ENCODE measurements at regions of chr12 and their contacts with region 1.

Region 1: GRCh38 chr12:127165567-127166392 is 1101.2 kb upstream of the TMEM132C start:
- DNase-seq: peak; percentile 86
- H3K4me3 Mint-ChIP-seq: peak overlapping the region; percentile 74
- H3K27ac Mint-ChIP-seq: no peak overlapping the region
- H3K4me1 Mint-ChIP-seq: peaks cover 22% of the 10 kb centered on the region
- H3K27me3 Mint-ChIP-seq: peaks cover 7% of the 10 kb centered on the region

Region 2: GRCh38 chr12:127083008-127083949 is 82.5 kb before region 1 on chr12:
- CTCF ChIA-PET with region 1: no interaction called
- intact Hi-C with region 1: loop called (anchors 1 kb)
- DNase-seq: peak; percentile 44
- H3K4me3 Mint-ChIP-seq: no peak overlapping the region
- H3K27ac Mint-ChIP-seq: peak overlapping the region; percentile 31
- H3K4me1 Mint-ChIP-seq: peaks cover 11% of the 10 kb centered on the region
- H3K27me3 Mint-ChIP-seq: peaks cover 5% of the 10 kb centered on the region

Region 3: GRCh38 chr12:127145929-127146789 is 19.6 kb before region 1 on chr12:
- CTCF ChIA-PET with region 1: no interaction called
- intact Hi-C with region 1: loop called (anchors 1 kb)
- DNase-seq: peak; percentile 64
- H3K4me3 Mint-ChIP-seq: peak overlapping the region; percentile 79
- H3K27ac Mint-ChIP-seq: no peak overlapping the region
- H3K4me1 Mint-ChIP-seq: peaks cover 5% of the 10 kb centered on the region
- H3K27me3 Mint-ChIP-seq: peaks cover 2% of the 10 kb centered on the region

Region 4: GRCh38 chr12:127559349-127560040 is 393.7 kb after region 1 on chr12:
- CTCF ChIA-PET with region 1: no interaction called
- intact Hi-C with region 1: loop called (anchors 10 kb)
- DNase-seq: peak; percentile 87
- H3K4me3 Mint-ChIP-seq: no peak overlapping the region
- H3K27ac Mint-ChIP-seq: peak overlapping the region; percentile 89
- H3K4me1 Mint-ChIP-seq: peaks cover 11% of the 10 kb centered on the region
- H3K27me3 Mint-ChIP-seq: peaks cover 12% of the 10 kb centered on the region

Measured in activated naive CD4-positive, alpha-beta T cell treated with anti-CD3 and anti-CD28 coated beads for 36 hours (primary cell).